Adrenal gland (tissue), 19 donors: ENCODE measurements at regions of chr17 and their contacts with region 1.

Region 1: DNA sequence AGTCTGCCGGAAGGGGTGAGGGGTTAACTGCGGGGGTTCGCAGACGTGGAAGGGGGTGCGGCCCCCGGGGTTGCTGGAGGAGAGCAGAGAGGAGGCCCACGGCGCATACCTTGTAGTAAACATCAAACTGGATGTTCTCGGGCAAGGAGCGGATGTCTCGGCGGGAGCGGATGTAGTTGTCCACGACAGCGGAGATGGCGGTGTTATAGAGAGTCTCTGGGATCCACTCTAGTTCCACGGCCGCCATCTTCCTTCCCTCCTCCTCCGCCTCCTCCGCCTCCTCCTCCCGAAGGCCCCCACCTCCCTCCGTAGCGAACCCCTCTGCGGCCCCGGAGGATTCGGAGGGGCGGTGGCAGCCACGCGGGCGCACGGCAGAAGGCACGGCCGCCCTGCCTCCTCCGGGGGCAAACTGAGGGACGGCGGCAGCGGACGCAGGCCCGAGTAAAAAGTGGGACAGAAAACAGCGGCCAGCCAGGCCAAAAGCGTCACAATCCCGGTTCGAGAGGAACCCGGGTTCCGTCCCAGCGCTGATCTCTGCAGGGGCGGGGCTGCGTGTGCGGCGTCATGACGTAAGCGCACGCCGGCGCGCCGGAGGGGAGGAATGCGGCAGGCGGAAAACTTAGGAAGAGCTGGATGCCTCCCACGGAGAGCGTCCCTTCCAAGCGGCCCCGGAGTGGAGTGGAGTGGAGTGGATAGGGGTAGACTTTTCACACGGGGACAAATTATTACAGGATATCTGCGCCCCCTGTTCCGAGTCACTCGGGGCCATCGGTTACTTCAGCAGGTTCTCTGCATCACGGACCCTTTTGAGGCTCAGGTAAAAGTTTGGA is at the start of gene APPBP2:
- DNase-seq: peak; percentile 87 to 92 (median 88)
- H3K4me3 ChIP-seq: peak within 1 kb of the TSS; percentile 18 to 100 (median 97)
- H3K27ac ChIP-seq: peak within 1 kb of the TSS; percentile 88 to 100 (median 99)
- H3K4me1 ChIP-seq: peaks cover 8 to 44% of the 10 kb centered on the region in 2 donors
- H3K27me3 ChIP-seq: no peaks in the 10 kb centered on the region
- CTCF ChIP-seq: no peak
- POLR2A ChIP-seq: peak; percentile 72 to 92
- total RNA-seq, gene APPBP2: 18.8 to 63.4 (median 47.3) TPM

Region 2: DNA sequence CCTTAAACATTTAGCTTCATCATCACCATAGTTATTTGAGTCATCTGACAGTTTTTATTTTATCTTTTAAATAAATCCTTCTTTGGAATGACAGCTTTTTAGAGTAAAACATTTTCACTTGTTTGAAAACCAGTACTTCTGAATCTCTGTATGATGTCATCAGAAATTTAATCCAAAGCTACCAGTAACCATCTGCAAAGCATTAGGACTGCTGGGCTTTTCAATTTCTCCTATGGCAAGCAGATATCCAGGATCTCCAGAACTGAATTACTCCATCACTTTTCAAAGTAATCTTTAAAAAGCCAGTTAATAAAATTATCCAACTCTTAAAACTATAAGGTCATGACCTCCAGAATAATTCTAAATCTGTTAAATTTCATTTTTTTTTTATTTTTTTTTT is 52.1 kb before region 1 on chr17:
- intact Hi-C with region 1: loop called in 1 of 2 experiments (anchors 10 kb)
- DNase-seq: no peak
- H3K4me3 ChIP-seq: no peak overlapping the region
- H3K27ac ChIP-seq: no peak overlapping the region
- H3K4me1 ChIP-seq: peaks cover 22 to 34% of the 10 kb centered on the region in 2 donors
- H3K27me3 ChIP-seq: no peaks in the 10 kb centered on the region
- CTCF ChIP-seq: no peak
- POLR2A ChIP-seq: no peak

Region 3: DNA sequence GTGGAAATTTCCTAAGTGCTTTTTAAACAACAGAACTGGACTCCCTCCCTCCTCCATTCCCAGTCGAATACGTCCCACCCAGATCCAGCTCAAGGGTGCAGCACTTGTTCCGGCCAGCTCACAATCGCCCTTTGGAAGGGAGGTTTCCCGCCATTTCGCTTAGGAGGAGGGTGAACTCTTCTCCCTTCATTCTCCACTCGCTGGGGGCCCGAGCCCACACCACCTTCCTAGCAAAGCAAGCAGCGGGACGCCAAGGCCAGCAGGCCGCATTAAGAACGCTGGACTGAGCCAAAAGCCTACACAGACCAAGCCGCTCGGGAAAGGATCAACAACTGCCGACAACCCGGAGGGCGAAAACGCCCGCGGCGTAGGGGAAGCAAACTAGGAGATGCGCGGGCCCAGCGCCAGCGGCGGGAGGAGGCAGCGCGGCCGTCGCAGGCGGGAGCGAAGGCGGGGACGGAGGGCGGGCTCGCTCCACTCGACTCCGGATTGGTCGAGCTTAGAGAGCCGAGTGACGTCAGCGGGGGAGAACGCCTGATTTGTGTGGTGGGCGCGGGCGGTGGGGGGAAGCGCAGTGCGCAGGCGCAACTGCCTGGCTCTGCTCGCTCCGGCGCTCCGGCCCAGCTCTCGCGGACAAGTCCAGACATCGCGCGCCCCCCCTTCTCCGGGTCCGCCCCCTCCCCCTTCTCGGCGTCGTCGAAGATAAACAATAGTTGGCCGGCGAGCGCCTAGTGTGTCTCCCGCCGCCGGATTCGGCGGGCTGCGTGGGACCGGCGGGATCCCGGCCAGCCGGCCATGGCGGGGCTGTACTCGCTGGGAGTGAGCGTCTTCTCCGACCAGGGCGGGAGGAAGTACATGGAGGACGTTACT is 74.0 kb after region 1 on chr17 and contains the start of gene PPM1D:
- intact Hi-C with region 1: no loop called
- DNase-seq: peak; percentile 99 to 100 (median 100)
- H3K4me3 ChIP-seq: peak within 1 kb of the TSS; percentile 59 to 100 (median 74)
- H3K27ac ChIP-seq: peak within 1 kb of the TSS; percentile 86 to 96 (median 92)
- H3K4me1 ChIP-seq: peaks cover 7 to 33% of the 10 kb centered on the region in 2 donors
- H3K27me3 ChIP-seq: no peaks in the 10 kb centered on the region
- CTCF ChIP-seq: peak in 2 of 6 experiments; percentile 34 to 40
- POLR2A ChIP-seq: peak; percentile 70 to 88
- total RNA-seq, gene PPM1D: 3.4 to 16.3 (median 10.6) TPM

Region 4: GRCh38 chr17:60747069-60747808 is 221.3 kb after region 1 on chr17:
- intact Hi-C with region 1: no loop called
- DNase-seq: no peak
- H3K4me3 ChIP-seq: no peak overlapping the region
- H3K27ac ChIP-seq: no peak overlapping the region
- H3K4me1 ChIP-seq: no peaks in the 10 kb centered on the region
- H3K27me3 ChIP-seq: no peaks in the 10 kb centered on the region
- CTCF ChIP-seq: no peak
- POLR2A ChIP-seq: no peak